ENCODE measurements at regions of chr11 and their contacts with region 1.

Region 1: GRCh38 chr11:46826310-46827044 is 19.6 kb downstream of the CKAP5 start:
- DNase-seq: peak; percentile 77 to 98 (median 88)

Region 2: DNA sequence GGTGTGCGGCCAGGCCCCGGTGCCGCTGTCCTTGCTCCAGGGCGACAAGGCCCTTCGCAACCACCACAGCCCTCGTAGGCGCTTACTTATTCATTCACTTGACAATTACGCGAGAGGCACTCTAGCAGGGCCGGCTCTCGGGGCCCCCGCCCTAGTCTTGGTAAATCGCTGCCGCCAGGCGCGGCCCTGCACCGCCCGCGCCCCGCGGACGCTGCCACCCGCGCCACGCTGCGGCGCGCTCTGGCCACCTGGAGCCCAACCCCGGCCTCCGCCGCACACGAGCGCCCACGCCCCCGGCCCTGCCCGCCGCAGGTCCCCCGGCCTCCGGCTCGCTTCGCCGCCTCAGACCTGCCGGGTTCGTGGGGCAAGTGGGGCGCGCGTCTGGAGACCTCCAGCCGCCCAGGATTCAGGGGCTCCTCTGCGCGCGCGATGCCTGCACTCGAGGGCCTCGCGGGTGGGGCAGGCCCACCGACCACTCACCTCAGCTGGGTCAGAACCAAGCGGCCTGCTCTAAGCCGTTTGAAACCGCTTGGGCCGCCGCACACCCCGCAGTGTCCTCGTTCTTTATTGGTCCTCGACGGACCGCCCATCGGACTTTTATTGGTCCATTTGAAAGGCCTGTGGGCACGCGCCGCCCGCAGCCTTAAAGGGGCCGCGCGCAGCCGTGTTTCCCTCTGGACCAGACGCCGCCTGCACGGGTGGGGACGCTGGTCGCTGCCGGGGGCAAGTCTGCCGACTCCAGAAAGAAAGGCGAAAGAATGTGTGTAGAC is 19.4 kb after region 1 on chr11 and contains the start of gene CKAP5:
- intact Hi-C with region 1: loop called (anchors 2 kb)
- DNase-seq: peak; percentile 88 to 99 (median 92)

Region 3: GRCh38 chr11:47176328-47177228 is 350.1 kb after region 1 on chr11 and contains the start of gene ARFGAP2:
- intact Hi-C with region 1: no loop called
- DNase-seq: peak; percentile 94 to 100 (median 98)